Head of caudate nucleus (tissue), 42 donors: ENCODE measurements at regions of chr6 and their contacts with region 1.

Region 1: GRCh38 chr6:125114248-125114858 is 39.2 kb upstream of the TPD52L1 start:
- DNase-seq: peak in 40 of 42 donors; percentile 5 to 91 (median 68)

Region 2: GRCh38 chr6:124870611-124871459 is 243.5 kb before region 1 on chr6:
- intact Hi-C with region 1: loop called (anchors 5 kb)
- DNase-seq: peak in 6 of 42 donors; percentile 13 to 44 (median 17)

Region 3: DNA sequence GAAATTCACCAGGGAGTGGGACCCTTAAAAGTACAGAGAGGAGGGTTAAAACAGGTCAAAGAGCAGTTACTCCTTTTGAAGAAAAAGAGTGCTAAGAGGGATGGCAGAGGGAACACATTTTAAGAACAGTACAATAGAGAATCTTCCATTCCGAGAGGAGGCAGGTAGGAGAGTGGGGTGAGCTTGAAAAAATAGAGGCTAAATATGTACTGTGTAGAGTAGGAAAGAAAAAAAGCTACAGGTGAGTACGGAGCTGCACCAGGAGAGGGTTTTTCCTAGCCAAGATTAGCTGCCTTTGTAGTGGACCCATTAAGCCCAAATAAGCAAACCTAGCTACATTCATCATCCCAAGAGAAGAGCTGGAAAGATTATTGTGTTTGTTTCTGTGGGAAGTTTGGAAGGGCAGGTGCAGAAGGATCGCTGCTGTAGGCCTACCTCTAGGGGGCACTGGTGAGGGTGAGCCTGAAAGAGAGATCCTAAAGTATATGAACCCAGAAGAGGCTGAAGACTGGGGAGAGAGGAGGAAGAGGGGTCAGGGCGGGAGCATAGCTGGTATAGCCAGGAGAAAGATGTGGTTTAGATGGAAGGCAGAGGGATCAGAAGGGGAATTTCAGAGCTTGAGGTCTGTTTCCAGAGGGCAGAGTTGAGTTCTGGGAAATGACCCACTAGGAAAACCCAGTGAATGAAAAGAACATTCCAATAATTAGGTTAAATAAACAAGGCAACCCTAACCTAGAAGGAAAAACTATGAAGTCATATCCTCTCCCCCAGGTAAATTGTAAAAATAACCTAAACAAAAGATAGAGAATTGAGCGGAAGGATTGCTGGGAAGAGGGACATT is 792.0 kb after region 1 on chr6:
- intact Hi-C with region 1: no loop called
- DNase-seq: peak in 25 of 42 donors; percentile 16 to 77 (median 43)